Activated naive CD4-positive, alpha-beta T cell treated with anti-CD3 and anti-CD28 coated beads for 36 hours (primary cell): ENCODE measurements at regions of chr11 and their contacts with region 1.

Region 1: DNA sequence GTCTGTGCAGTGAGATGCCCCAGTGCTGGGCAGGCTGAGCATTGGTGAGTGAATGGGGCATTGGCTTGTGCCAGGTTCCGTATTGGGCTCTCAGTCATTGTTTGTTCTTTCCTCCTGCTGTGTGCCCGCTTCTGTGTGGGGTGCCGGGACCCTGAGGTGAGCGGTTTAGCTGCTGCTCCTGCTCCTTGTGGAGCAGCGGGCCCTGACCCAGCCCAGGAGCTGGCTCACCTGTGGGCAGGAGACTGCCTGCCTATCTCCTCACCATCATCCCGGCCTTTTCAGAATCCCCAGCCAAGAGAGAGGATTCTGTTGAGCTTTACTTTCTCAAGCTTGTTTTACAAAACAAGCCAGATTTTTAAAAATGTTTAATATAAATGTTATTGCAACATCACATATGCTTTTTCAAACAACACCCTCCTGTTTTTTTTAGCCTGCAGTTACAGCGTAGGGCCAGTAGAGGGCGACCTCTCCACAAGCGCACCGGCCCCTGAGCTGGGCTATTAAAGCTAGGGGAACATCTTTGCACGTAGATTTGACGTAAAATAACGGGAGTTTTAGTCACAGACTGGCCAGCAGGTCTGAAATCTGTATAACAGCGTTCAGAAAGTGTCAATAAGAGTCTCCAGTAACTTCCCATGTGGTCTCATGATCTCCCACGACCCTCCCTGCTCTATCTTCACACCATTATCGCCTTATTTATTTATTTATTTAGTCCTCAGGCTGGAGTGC is 25.1 kb upstream of the RELT start:
- DNase-seq: peak; percentile 73
- H3K4me3 Mint-ChIP-seq: no peak overlapping the region
- H3K27ac Mint-ChIP-seq: peak overlapping the region; percentile 38
- H3K4me1 Mint-ChIP-seq: no peaks in the 10 kb centered on the region
- H3K27me3 Mint-ChIP-seq: no peaks in the 10 kb centered on the region

Region 2: DNA sequence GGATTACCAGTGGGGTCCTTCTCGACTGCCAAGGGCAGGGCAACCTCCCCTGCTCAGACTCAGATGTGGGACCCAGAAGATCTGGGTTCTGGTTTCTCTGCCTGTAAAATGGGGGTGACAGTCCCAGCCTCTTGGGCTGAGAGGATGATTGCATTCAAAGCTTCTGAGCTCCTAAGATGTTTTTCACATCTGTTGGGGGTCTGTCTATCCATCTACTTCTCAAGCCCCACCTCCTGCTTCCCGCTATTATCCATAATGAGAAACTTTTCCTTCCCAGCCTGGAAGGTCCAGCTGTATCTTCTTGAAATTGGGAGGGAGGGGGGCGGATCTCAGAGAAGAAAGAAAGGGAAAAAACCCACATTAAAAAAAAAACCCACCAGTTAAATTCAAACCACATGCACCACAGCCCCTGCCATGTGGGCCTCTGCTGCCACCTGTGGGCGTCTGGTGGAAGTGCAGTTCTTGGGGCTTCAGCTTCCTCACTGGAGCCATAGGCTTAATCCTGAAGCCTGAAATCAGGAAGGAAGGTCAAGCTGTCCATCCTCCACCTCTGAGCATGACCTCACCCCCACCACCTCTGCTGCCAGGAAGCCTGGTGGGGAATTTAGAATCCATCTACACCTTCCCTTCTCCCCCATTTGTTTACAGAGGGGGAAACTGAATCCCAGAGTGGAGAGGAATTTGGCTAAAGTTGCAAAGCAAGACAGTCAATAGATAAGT is 15.7 kb before region 1 on chr11:
- CTCF ChIA-PET with region 1: interaction called, 16 read pairs
- intact Hi-C with region 1: no loop called
- DNase-seq: peak; percentile 87
- H3K4me3 Mint-ChIP-seq: no peak overlapping the region
- H3K27ac Mint-ChIP-seq: no peak overlapping the region
- H3K4me1 Mint-ChIP-seq: no peaks in the 10 kb centered on the region
- H3K27me3 Mint-ChIP-seq: no peaks in the 10 kb centered on the region

Region 3: GRCh38 chr11:73393479-73394380 is 42.7 kb after region 1 on chr11:
- CTCF ChIA-PET with region 1: interaction called, 44 read pairs
- intact Hi-C with region 1: loop called (anchors 1 kb)
- DNase-seq: peak; percentile 82
- H3K4me3 Mint-ChIP-seq: no peak overlapping the region
- H3K27ac Mint-ChIP-seq: no peak overlapping the region
- H3K4me1 Mint-ChIP-seq: no peaks in the 10 kb centered on the region
- H3K27me3 Mint-ChIP-seq: no peaks in the 10 kb centered on the region

Region 4: GRCh38 chr11:73625696-73626318 is 274.7 kb after region 1 on chr11:
- CTCF ChIA-PET with region 1: interaction called, 15 read pairs
- intact Hi-C with region 1: no loop called
- DNase-seq: peak; percentile 82
- H3K4me3 Mint-ChIP-seq: no peak overlapping the region
- H3K27ac Mint-ChIP-seq: no peak overlapping the region
- H3K4me1 Mint-ChIP-seq: peaks cover 2% of the 10 kb centered on the region
- H3K27me3 Mint-ChIP-seq: peaks cover 16% of the 10 kb centered on the region